GM18951 (cell line): ENCODE measurements at regions of chr22 and their contacts with region 1.

Region 1: GRCh38 chr22:36775964-36776669 is at the start of gene IFT27:
- POLR2A ChIP-seq: peak; percentile 62

Region 2: DNA sequence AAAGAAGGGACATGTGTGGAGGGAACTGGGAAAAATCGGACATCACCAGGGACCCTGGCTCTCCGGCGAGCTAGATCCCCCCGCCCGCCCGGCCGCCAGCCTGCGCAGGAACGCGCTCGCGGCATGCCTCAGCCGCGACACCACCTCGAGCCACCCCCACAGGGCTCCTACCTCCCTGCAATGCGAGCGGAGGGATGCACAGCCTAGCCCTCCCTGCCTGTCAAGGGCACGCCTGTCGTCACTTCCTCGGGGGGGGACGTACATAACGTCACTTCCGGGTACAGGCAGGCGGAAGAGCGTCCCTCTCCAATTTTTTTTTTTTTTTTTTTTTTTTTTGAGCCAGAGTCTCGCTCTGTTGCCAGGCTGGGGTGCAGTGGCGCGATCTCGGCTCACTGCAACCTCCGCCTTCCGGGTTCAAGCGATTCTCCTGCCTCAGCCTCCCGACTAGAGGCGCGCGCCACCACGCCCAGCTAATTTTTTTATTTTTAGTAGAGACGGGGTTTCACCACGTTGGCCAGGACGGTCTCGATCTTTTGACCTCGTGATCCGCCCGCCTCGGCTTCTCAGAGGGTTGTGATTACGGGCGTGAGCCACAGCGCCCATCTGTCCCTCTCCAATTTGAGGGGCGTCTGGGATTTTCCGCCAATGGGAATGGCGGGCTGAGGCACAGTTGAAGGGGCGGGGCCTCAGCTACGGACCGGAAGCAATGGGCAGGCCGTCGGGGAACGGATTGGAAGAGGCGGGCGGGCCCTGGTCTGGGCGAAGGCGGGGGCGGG is 294.5 kb before region 1 on chr22 and contains the start of gene TXN2:
- in situ Hi-C with region 1: no loop called
- POLR2A ChIP-seq: peak; percentile 95

Region 3: GRCh38 chr22:36986242-36986821 is 210.2 kb after region 1 on chr22:
- in situ Hi-C with region 1: loop called (anchors 10 kb)
- POLR2A ChIP-seq: no peak